Prostate gland (tissue), 2 donors: ENCODE measurements at regions of chr12 and their contacts with region 1.

Region 1: DNA sequence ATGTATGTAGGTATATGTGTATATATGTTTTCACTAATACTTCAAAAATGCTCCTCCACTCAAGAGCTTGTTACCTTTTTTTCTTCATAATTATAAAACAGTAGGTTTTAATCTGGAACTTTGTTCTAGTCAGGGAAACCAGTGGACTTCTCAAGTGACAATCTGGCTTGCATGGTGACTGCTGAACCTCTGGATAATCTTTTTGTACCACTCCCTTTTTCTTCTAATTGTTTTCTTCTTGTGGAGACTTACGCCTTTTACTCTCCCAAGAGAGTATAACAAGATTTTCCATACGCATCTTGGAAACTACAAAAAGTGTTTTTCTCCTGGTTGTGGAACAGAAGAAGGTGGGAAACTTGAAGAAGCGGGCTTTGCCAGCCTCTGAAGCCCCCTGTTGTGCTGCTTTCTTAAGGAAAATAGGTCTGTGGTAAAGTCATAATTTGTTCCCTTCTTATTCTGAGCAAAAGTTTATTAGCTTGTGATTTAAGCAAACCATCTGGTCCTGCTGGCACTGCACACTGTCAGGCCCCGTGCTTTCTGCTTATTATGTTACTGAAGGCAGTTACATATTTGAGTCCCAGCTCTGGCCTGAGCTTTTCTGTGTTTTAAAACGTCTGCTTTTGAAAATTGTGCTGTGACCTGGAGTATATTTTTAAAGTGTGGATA is 291.8 kb downstream of the ERC1 start:
- DNase-seq: peak; percentile 54
- H3K4me3 ChIP-seq: no peak overlapping the region
- H3K27ac ChIP-seq: peak overlapping the region; percentile 22 to 41
- H3K4me1 ChIP-seq: no peaks in the 10 kb centered on the region
- H3K27me3 ChIP-seq: no peaks in the 10 kb centered on the region
- CTCF ChIP-seq: no peak
- POLR2A ChIP-seq: no peak

Region 2: DNA sequence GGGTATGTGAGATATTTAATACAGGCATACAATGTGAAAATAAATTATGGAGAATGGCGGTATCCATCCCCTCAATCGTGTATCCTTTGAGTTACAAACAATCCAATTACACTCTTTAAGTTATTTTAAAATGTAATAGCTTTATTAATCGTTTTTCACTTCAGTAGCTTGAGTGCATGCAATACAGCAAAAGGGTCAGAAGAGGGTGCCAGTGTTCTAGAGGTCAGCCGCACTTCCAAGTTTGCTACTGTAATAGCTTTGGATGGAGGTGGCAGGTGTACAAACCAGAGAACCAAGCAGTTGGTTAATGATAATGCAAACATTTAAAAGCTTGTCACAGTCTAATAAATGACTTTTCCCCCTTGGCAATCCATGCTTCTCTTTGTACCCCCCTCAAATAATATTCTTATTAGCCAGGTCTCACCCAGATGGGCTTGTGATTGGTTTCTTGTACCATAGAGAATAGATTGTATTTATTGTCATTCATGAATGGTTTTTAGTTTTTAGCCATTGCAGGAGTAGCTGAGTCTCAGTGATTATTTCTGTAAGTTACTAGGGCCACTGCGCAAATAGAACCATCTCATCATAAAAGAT is 164.7 kb before region 1 on chr12:
- intact Hi-C with region 1: loop called (anchors 10 kb)
- DNase-seq: peak; percentile 80
- H3K4me3 ChIP-seq: no peak overlapping the region
- H3K27ac ChIP-seq: no peak overlapping the region
- H3K4me1 ChIP-seq: no peaks in the 10 kb centered on the region
- H3K27me3 ChIP-seq: no peaks in the 10 kb centered on the region
- CTCF ChIP-seq: peak; percentile 84 to 96 (median 92)
- POLR2A ChIP-seq: no peak

Region 3: GRCh38 chr12:1217191-1217949 is 65.4 kb before region 1 on chr12:
- intact Hi-C with region 1: loop called (anchors 5 kb)
- DNase-seq: peak; percentile 66
- H3K4me3 ChIP-seq: no peak overlapping the region
- H3K27ac ChIP-seq: peak overlapping the region; percentile 44 to 77
- H3K4me1 ChIP-seq: peaks cover 39% of the 10 kb centered on the region
- H3K27me3 ChIP-seq: no peaks in the 10 kb centered on the region
- CTCF ChIP-seq: peak in 1 of 4 experiments; percentile 8
- POLR2A ChIP-seq: no peak

Region 4: GRCh38 chr12:1367331-1368291 is 84.8 kb after region 1 on chr12:
- intact Hi-C with region 1: no loop called
- DNase-seq: no peak
- H3K4me3 ChIP-seq: no peak overlapping the region
- H3K27ac ChIP-seq: no peak overlapping the region
- H3K4me1 ChIP-seq: no peaks in the 10 kb centered on the region
- H3K27me3 ChIP-seq: no peaks in the 10 kb centered on the region
- CTCF ChIP-seq: no peak
- POLR2A ChIP-seq: no peak

Region 5: GRCh38 chr12:1583421-1584078 is 300.7 kb after region 1 on chr12:
- intact Hi-C with region 1: loop called (anchors 5 kb)
- DNase-seq: peak; percentile 71
- H3K4me3 ChIP-seq: peak overlapping the region in 1 of 2 donors; percentile 7
- H3K27ac ChIP-seq: no peak overlapping the region
- H3K4me1 ChIP-seq: peaks cover 3% of the 10 kb centered on the region
- H3K27me3 ChIP-seq: no peaks in the 10 kb centered on the region
- CTCF ChIP-seq: peak; percentile 62 to 93 (median 89)
- POLR2A ChIP-seq: no peak